Activated CD4-positive, alpha-beta memory T cell treated with anti-CD3 and anti-CD28 coated beads for 36 hours (primary cell): ENCODE measurements at regions of chr12 and their contacts with region 1.

Region 1: DNA sequence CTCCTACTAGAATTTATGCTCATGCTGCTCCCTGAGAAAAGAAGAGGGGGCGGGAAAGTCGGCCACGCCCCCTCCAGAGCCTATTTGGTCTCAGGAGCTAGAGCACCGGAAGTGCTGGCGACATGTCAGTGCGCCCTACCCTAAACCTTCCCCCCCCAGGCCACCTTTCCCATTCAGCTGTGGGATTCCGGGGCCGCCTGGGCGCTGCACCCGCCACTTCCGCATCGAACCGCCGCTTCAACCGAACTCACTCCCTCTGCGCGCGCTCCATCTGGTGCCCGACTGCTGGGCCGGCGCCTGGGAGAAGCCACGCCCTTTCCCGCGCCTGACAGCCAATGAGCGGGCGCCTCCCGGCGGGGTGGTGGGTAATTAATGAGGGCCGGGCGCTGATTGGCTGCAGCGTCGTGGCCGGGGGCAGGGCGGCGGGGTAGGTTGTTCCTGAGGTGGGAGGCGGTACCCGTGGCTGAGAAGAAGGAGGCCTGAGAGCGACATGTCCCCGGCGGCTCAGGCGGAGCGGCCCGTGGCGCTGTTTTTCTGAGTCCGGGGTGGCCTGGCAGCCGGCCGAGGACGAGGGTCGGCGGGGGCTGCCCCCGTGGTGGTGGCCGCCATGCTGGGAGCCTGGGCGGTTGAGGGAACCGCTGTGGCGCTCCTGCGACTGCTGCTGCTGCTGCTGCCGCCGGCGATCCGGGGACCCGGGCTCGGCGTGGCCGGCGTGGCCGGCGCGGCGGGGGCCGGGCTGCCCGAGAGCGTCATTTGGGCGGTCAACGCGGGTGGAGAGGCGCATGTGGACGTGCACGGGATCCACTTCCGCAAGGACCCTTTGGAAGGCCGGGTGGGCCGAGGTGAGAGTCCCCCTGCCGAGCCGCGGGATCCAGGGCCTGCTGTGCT is at the start of gene MLEC:
- DNase-seq: peak; percentile 99
- H3K4me3 Mint-ChIP-seq: peak within 1 kb of the TSS; percentile 90
- H3K27ac Mint-ChIP-seq: peak within 1 kb of the TSS; percentile 91
- H3K4me1 Mint-ChIP-seq: peaks cover 50% of the 10 kb centered on the region
- H3K27me3 Mint-ChIP-seq: no peaks in the 10 kb centered on the region
- total RNA-seq, gene MLEC: 92.9 to 93.7 TPM

Region 2: GRCh38 chr12:120132863-120133385 is 554.0 kb before region 1 on chr12:
- CTCF ChIA-PET with region 1: no interaction called
- POLR2A ChIA-PET with region 1: no interaction called
- intact Hi-C with region 1: no loop called
- DNase-seq: no peak
- H3K4me3 Mint-ChIP-seq: no peak overlapping the region
- H3K27ac Mint-ChIP-seq: no peak overlapping the region
- H3K4me1 Mint-ChIP-seq: peaks cover under 1% of the 10 kb centered on the region
- H3K27me3 Mint-ChIP-seq: no peaks in the 10 kb centered on the region

Region 3: GRCh38 chr12:120317224-120318105 is 369.5 kb before region 1 on chr12:
- CTCF ChIA-PET with region 1: no interaction called
- POLR2A ChIA-PET with region 1: no interaction called
- intact Hi-C with region 1: loop called (anchors 2 kb)
- DNase-seq: peak; percentile 100
- H3K4me3 Mint-ChIP-seq: peak overlapping the region; percentile 90
- H3K27ac Mint-ChIP-seq: peak overlapping the region; percentile 88
- H3K4me1 Mint-ChIP-seq: peaks cover 13% of the 10 kb centered on the region
- H3K27me3 Mint-ChIP-seq: no peaks in the 10 kb centered on the region

Region 4: DNA sequence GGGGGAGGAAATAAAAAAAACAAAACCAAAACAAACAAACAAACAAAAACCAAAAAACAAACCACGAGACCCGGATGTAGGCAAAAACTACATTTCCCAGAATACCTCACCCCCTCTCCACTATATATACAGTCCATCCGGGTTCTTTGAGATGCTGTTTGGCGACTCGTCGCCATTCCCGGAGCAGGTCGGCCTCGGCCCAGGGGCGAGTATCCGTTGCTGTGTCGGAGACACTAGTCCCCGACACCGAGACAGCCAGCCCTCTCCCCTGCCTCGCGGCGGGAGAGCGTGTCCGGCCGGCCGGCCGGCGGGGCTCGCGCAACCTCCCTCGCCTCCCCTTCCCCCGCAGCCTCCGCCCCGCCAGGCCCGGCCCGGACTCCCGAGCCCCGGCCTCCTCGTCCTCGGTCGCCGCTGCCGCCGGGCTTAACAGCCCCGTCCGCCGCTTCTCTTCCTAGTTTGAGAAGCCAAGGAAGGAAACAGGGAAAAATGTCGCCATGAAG is 152.7 kb before region 1 on chr12 and contains the start of gene RNF10:
- CTCF ChIA-PET with region 1: no interaction called
- POLR2A ChIA-PET with region 1: no interaction called
- intact Hi-C with region 1: loop called (anchors 2 kb)
- DNase-seq: peak; percentile 80
- H3K4me3 Mint-ChIP-seq: peak within 1 kb of the TSS; percentile 97
- H3K27ac Mint-ChIP-seq: peak within 1 kb of the TSS; percentile 96
- H3K4me1 Mint-ChIP-seq: peaks cover 43% of the 10 kb centered on the region
- H3K27me3 Mint-ChIP-seq: no peaks in the 10 kb centered on the region
- total RNA-seq, gene RNF10: 188 to 210 TPM

Region 5: DNA sequence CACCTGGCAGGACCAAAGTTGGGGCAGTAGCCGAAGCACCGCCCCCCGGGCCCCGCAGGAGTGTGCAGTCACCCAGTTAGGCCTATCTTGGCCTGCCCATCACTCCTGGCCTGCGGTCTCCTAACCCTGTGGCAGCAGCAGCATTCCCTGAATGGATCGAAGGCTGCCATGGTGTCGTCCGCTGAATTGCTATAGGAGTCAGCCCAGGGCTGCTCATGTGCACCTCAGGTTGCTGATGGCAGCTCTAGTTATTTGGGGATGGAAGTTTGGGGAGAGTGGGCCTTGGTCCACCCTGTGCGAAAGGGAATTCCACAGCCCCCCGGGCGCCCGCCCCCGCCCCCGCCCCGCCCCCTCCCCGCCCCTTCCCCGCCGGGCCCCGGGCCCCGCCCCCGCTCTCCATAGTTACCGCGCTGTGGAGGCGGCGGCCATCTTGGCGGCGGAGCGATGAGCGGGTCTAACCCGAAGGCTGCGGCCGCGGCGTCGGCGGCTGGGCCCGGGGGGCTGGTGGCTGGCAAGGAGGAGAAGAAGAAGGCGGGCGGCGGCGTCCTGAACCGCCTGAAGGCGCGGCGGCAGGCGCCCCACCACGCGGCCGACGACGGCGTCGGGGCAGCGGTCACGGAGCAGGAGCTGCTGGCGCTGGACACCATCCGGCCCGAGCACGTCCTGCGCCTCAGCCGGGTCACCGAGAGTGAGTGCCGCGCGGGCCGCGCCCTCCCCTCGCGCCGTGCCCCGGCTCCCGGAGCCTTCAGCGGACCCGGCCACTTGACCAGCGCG is 23.3 kb after region 1 on chr12 and contains the start of gene UNC119B:
- CTCF ChIA-PET with region 1: interaction called, 3 read pairs
- POLR2A ChIA-PET with region 1: interaction called, 15 read pairs
- intact Hi-C with region 1: loop called (anchors 1 kb)
- DNase-seq: peak; percentile 78
- H3K4me3 Mint-ChIP-seq: peak within 1 kb of the TSS; percentile 84
- H3K27ac Mint-ChIP-seq: peak within 1 kb of the TSS; percentile 67
- H3K4me1 Mint-ChIP-seq: peaks cover 33% of the 10 kb centered on the region
- H3K27me3 Mint-ChIP-seq: no peaks in the 10 kb centered on the region
- total RNA-seq, gene UNC119B: 28.2 to 31.3 TPM

Region 6: DNA sequence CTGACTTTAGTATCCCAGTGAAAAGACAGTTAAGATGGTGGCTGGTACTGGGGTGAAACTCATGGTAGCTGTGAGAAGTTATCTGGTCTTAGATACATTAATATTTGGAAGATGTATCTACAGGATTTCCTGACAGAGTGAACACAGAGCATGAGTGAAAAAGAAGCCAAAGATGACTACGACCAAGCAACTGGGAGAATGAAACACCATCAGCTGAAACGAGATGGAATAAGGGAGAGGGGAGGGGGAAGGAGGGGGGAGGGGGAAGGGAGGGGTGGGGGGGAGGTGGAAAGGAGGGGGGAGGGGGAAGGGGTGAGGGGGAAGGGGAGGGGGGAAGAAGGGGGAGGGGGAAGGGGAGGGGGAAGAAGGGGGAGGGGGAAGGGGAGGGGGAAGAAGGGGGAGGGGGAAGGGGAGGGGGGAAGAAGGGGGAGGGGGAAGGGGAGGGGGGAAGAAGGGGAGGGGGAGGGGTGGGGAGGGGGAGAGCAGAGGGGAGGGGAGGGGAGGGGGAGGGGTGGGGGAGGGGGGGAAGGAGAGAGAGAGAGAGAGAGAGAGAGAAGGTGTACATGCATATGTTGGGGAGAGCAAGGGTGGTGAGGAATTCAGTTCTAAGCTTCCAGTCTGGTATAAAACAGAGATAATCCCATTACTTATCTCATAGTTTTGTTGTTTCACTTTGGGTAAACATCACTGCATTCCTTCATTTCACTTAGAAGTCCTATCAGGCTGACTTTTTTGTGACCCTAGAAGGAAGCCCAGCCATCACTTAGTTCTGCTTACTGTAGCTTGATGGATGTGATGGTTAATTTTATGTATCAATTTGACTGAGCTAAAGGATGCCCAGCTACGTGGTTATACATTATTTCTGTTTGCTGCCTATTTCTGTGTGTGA is 143.4 kb after region 1 on chr12:
- CTCF ChIA-PET with region 1: no interaction called
- POLR2A ChIA-PET with region 1: no interaction called
- intact Hi-C with region 1: no loop called
- DNase-seq: no peak
- H3K4me3 Mint-ChIP-seq: no peak overlapping the region
- H3K27ac Mint-ChIP-seq: peak overlapping the region; percentile 11
- H3K4me1 Mint-ChIP-seq: peaks cover 62% of the 10 kb centered on the region
- H3K27me3 Mint-ChIP-seq: no peaks in the 10 kb centered on the region

Region 7: GRCh38 chr12:120961604-120962531 is 274.9 kb after region 1 on chr12:
- CTCF ChIA-PET with region 1: interaction called, 3 read pairs
- POLR2A ChIA-PET with region 1: interaction called, 3 read pairs
- intact Hi-C with region 1: loop called (anchors 5 kb)
- DNase-seq: no peak
- H3K4me3 Mint-ChIP-seq: no peak overlapping the region
- H3K27ac Mint-ChIP-seq: no peak overlapping the region
- H3K4me1 Mint-ChIP-seq: peaks cover 36% of the 10 kb centered on the region
- H3K27me3 Mint-ChIP-seq: no peaks in the 10 kb centered on the region

Region 8: GRCh38 chr12:121399391-121400331 is 712.7 kb after region 1 on chr12 and contains the start of gene RNF34:
- CTCF ChIA-PET with region 1: no interaction called
- POLR2A ChIA-PET with region 1: no interaction called
- intact Hi-C with region 1: loop called (anchors 2 kb)
- DNase-seq: peak; percentile 99
- H3K4me3 Mint-ChIP-seq: peak within 1 kb of the TSS; percentile 94
- H3K27ac Mint-ChIP-seq: peak within 1 kb of the TSS; percentile 96
- H3K4me1 Mint-ChIP-seq: peaks cover 33% of the 10 kb centered on the region
- H3K27me3 Mint-ChIP-seq: no peaks in the 10 kb centered on the region
- total RNA-seq, gene RNF34: 70.4 to 72.5 TPM